Activated CD4-positive, alpha-beta T cell treated with anti-CD3 and anti-CD28 coated beads for 36 hours (primary cell): ENCODE measurements at regions of chr2 and their contacts with region 1.

Region 1: DNA sequence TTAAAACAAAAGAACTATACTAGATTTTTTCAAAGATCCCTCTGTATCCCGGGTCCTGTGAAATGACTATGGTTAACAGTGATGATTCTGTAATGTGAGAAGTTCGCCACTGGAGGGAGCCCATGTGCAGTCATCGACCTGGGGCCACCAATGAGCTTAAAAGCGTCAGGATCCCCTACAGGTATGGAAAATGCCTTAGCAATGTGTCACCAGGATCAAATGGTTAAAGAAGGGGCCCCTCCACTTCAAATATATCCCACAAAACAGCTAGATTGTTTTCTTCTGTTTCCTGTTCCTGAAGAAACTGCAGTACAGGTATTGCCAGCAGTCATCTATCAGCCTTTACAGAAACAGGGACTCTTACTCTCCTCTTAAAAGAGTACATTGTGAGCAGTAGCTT is 15.3 kb downstream of the CHRNA1 start:
- DNase-seq: peak; percentile 85
- ATAC-seq: peak; percentile 33
- H3K4me3 Mint-ChIP-seq: no peak overlapping the region
- H3K27ac Mint-ChIP-seq: no peak overlapping the region
- H3K4me1 Mint-ChIP-seq: peaks cover 39% of the 10 kb centered on the region
- H3K27me3 Mint-ChIP-seq: peaks cover 2% of the 10 kb centered on the region

Region 2: GRCh38 chr2:174697255-174697654 is 51.7 kb before region 1 on chr2:
- CTCF ChIA-PET with region 1: interaction called, 35 read pairs
- POLR2A ChIA-PET with region 1: no interaction called
- intact Hi-C with region 1: loop called (anchors 1 kb)
- DNase-seq: peak; percentile 80
- ATAC-seq: peak; percentile 99
- H3K4me3 Mint-ChIP-seq: no peak overlapping the region
- H3K27ac Mint-ChIP-seq: no peak overlapping the region
- H3K4me1 Mint-ChIP-seq: no peaks in the 10 kb centered on the region
- H3K27me3 Mint-ChIP-seq: peaks cover 3% of the 10 kb centered on the region

Region 3: DNA sequence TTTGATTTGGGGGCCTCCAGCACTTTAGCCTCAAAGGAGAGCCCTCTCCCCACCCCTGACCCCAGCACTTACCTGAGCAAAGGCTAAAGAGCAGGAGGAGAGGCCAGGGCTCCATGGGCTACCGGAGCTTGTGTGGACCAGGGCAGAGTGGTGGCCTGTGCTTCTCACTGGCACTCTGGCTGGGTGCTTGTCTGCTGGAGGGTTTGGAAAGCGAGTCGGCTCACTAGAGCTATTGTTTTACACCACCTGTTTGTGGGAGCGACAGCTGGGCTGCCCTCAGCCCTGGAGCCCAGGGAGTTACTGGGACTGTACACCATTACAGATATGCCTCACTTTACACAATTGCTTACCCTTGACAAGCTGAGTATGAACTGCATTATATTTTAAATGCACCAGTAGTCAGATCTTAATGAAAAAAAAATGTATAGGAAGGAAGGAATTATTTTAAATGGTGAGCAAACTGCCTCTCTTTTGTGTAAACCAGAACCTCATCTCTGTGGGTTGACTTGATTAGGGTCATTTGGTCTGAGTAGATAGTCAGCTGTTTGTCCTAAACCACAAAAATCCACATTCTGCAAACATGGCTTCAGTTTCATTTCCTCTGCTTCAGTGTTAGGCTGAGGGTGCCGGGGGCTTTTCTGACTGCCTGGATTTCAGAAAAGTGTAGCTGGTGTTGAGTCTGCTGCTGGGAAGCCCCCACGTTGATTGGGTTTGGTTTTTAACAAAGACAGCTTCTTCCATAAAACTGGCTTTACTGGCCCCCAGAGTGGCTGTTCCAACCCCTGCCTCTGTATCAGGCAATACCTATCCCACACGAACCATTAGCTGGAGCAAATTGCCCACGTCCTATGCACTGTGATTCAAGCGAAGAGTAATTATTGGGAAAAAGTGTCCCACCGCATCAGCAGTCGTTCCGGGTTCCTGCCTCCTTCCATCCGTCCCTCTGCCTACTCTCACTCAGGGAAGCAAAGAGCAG is 15.6 kb after region 1 on chr2 and contains the start of gene CHRNA1:
- CTCF ChIA-PET with region 1: interaction called, 16 read pairs
- POLR2A ChIA-PET with region 1: no interaction called
- intact Hi-C with region 1: no loop called
- DNase-seq: no peak
- ATAC-seq: no peak
- H3K4me3 Mint-ChIP-seq: no peak within 1 kb of the TSS
- H3K27ac Mint-ChIP-seq: no peak within 1 kb of the TSS
- H3K4me1 Mint-ChIP-seq: peaks cover 5% of the 10 kb centered on the region
- H3K27me3 Mint-ChIP-seq: no peaks in the 10 kb centered on the region
- total RNA-seq, gene CHRNA1: not detected

Region 4: GRCh38 chr2:174794851-174795374 is 46.0 kb after region 1 on chr2:
- CTCF ChIA-PET with region 1: interaction called, 7 read pairs
- POLR2A ChIA-PET with region 1: interaction called, 3 read pairs
- intact Hi-C with region 1: loop called (anchors 1 kb)
- DNase-seq: peak; percentile 46
- ATAC-seq: peak; percentile 73
- H3K4me3 Mint-ChIP-seq: no peak overlapping the region
- H3K27ac Mint-ChIP-seq: peak overlapping the region; percentile 48
- H3K4me1 Mint-ChIP-seq: peaks cover 26% of the 10 kb centered on the region
- H3K27me3 Mint-ChIP-seq: no peaks in the 10 kb centered on the region

Region 5: DNA sequence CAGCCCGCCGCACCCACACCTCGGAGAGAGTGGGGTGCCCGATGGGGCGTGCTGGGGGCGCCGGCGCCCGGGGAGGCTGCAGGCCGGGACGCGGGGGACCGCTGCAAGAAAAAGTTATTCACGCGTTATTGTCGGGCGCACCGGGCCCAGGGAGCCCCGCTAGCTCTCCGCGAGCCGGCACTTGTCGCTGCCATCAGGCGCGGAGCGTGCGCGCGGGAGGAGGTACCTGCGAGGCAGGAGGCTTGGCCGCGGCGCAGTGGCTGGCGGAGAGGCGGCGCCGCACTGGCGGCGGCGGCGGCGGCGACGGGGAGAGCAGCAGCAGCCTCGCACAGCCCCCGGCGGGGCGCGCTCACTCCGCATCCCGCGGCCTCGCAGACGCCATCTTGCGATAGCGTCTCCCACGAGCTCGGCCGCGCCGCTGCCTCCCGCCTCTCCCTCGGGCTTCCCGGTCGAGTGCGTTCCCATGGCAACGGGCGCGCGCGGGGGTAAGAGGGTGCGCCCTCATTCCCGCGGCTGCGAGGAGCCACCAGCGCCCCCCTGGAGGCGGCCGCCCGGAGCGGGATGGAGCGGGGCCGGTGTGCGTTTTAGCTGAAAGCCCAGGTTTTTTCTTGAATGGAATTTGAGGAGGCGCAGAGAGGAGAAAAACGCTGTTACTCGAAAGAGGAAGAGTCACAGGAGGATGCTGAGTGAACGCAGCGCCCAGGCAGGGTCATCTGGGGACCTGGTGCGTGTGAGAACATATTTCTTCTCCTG is 256.2 kb after region 1 on chr2 and contains the start of gene CHN1:
- CTCF ChIA-PET with region 1: interaction called, 11 read pairs
- POLR2A ChIA-PET with region 1: no interaction called
- intact Hi-C with region 1: loop called in 1 of 2 experiments (anchors 1 kb)
- DNase-seq: peak; percentile 81
- ATAC-seq: peak; percentile 96
- H3K4me3 Mint-ChIP-seq: peak within 1 kb of the TSS; percentile 77
- H3K27ac Mint-ChIP-seq: no peak within 1 kb of the TSS
- H3K4me1 Mint-ChIP-seq: peaks cover 4% of the 10 kb centered on the region
- H3K27me3 Mint-ChIP-seq: peaks cover 46% of the 10 kb centered on the region
- total RNA-seq, gene CHN1: 3.8 TPM